ENCODE measurements at regions of chr4 and their contacts with region 1.

Region 1: DNA sequence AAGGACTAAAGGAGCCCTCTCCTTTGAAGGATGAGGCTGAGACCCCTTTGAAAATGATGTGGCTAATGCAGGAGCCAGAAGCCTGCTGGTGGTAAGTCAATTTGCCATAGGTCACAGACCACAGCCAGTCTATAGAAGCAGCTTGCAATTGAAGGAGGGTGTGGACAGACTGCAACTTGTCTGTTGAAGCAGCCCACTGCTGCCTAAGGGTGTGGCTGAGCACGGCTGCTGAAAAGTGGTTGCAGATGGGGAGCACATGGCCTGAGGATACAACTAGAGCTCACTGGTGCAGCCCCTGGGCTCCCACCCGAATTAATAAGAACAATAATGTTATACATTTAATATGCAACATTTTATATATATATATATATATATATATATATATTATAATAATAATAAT is 11.4 kb upstream of the EXOC1L start:
- DNase-seq: no peak
- H3K4me3 ChIP-seq: no peak overlapping the region
- H3K27ac ChIP-seq: no peak overlapping the region
- H3K4me1 ChIP-seq: no peaks in the 10 kb centered on the region
- H3K27me3 ChIP-seq: no peaks in the 10 kb centered on the region
- CTCF ChIP-seq: no peak
- EP300 ChIP-seq: no peak
- POLR2A ChIP-seq: no peak
- RAD21 ChIP-seq: no peak

Region 2: GRCh38 chr4:55635741-55636655 is 172.2 kb before region 1 on chr4 and contains the start of gene NMU:
- CTCF ChIA-PET with region 1: no interaction called
- POLR2A ChIA-PET with region 1: no interaction called
- DNase-seq: peak in 1 of 2 experiments; percentile 73
- H3K4me3 ChIP-seq: peak within 1 kb of the TSS; percentile 52 to 74 (median 66)
- H3K27ac ChIP-seq: no peak within 1 kb of the TSS
- H3K4me1 ChIP-seq: peaks cover 8 to 27% (median 15%) of the 10 kb centered on the region in 4 experiments; a peak in 6 of 7 replicates
- H3K27me3 ChIP-seq: peaks cover 0 to 23% (median 15%) of the 10 kb centered on the region in 4 experiments; a peak in 6 of 7 replicates
- CTCF ChIP-seq: peak; percentile 7 to 31 (median 9); a peak in 3 of 4 replicates
- EP300 ChIP-seq: no peak
- POLR2A ChIP-seq: peak in 1 of 2 experiments; percentile 40; a peak in 1 of 3 replicates
- RAD21 ChIP-seq: peak in 1 of 2 experiments; percentile 49; a peak in 2 of 4 replicates
- total RNA-seq, gene NMU: 30.5 and 31.8 TPM in 2 replicates

Region 3: GRCh38 chr4:55819634-55820033 is 11.4 kb after region 1 on chr4 and contains the start of gene EXOC1L:
- CTCF ChIA-PET with region 1: interaction called, 11 read pairs
- POLR2A ChIA-PET with region 1: interaction called, 6 read pairs
- DNase-seq: peak; percentile 73 to 80
- H3K4me3 ChIP-seq: peak within 1 kb of the TSS in 2 of 4 experiments; percentile 21 to 38; a peak in 4 of 8 replicates
- H3K27ac ChIP-seq: no peak within 1 kb of the TSS
- H3K4me1 ChIP-seq: peaks cover 0 to 3% (median 1%) of the 10 kb centered on the region in 4 experiments; a peak in 2 of 7 replicates
- H3K27me3 ChIP-seq: no peaks in the 10 kb centered on the region; a peak in 2 of 7 replicates
- CTCF ChIP-seq: peak; percentile 18 to 38 (median 33)
- EP300 ChIP-seq: no peak
- POLR2A ChIP-seq: peak; percentile 69 to 83
- RAD21 ChIP-seq: peak; percentile 32 to 51; a peak in 3 of 4 replicates
- total RNA-seq, gene EXOC1L: not detected in 2 replicates

Region 4: DNA sequence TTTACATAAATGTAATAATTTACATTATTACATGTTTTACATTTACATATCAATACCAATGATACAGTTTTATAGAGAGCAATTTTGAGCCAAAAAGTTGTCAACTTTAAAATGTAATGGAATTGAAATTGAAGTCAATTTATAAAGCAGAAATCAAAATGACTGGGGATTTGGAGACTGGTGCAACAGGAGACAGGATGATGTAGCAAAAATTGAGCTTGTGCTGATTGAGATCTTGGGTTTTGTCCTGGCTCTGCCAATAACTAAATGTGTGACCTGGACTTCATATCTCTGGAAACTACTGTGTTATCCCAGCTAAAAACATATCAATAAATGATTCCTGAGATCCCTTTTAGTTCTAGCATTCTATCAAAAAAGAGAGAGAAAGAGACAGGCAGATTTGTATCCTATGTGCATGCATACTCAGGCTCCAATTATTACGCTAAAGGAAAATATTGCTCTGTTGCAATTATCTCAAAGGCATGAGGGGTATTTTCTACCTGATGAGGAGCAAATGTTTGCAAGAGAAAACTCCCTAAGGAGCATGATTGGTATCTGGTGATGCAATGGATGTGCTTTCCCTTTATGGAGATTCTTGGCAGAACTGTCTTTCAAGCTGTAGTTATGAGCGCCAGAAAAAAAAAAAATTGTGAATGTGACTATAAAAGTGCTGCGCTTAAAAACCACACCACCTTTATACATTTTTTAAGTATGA is 26.1 kb after region 1 on chr4:
- CTCF ChIA-PET with region 1: no interaction called
- POLR2A ChIA-PET with region 1: no interaction called
- DNase-seq: no peak
- H3K4me3 ChIP-seq: no peak overlapping the region
- H3K27ac ChIP-seq: no peak overlapping the region
- H3K4me1 ChIP-seq: no peaks in the 10 kb centered on the region
- H3K27me3 ChIP-seq: no peaks in the 10 kb centered on the region
- CTCF ChIP-seq: no peak
- EP300 ChIP-seq: no peak
- POLR2A ChIP-seq: no peak
- RAD21 ChIP-seq: no peak

Region 5: GRCh38 chr4:55993994-55994663 is 185.9 kb after region 1 on chr4:
- CTCF ChIA-PET with region 1: no interaction called
- POLR2A ChIA-PET with region 1: no interaction called
- DNase-seq: no peak
- H3K4me3 ChIP-seq: no peak overlapping the region
- H3K27ac ChIP-seq: no peak overlapping the region
- H3K4me1 ChIP-seq: peaks cover 0 to 10% (median 3%) of the 10 kb centered on the region in 4 experiments; a peak in 4 of 7 replicates
- H3K27me3 ChIP-seq: no peaks in the 10 kb centered on the region
- CTCF ChIP-seq: no peak
- EP300 ChIP-seq: no peak
- POLR2A ChIP-seq: no peak
- RAD21 ChIP-seq: no peak

Measured in H1 (cell line).